ENCODE measurements at regions of chr3 and their contacts with region 1.

Region 1: DNA sequence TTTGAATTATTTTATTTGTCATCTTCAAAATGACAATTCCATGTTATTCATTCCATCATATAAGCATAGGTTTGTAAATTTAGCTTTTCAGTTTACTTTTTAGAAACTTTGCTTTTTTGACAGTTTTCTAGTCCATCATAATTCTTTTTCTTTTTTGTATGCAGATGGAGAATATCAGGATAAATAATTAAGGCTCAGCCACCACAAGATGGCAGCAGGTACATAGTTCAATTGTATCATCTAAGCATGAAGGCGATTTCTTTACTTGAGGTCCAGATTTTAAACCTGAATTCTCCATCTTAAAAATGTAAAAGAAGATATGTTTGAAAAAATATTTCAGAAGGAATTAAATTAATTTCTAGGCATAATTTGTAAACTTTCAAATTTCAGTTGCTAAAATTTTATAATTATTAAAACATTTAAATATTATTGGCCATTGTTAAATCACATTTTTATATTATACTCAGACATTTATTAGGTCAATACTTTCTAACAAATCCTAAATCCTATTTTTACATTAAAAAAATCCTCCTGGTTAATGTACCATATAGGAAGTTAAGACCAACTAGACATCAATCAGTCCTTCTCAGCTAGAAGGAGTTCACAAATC is 15.1 kb downstream of the PLSCR5 start:
- DNase-seq: no peak
- ATAC-seq: no peak
- H3K4me3 ChIP-seq: no peak overlapping the region
- H3K4me3 Mint-ChIP-seq: no peak overlapping the region
- H3K27ac ChIP-seq: no peak overlapping the region
- H3K27ac Mint-ChIP-seq: no peak overlapping the region
- H3K4me1 ChIP-seq: no peaks in the 10 kb centered on the region
- H3K4me1 Mint-ChIP-seq: no peaks in the 10 kb centered on the region
- H3K27me3 ChIP-seq: no peaks in the 10 kb centered on the region
- H3K27me3 Mint-ChIP-seq: peaks cover 0 to 35% (median 10%) of the 10 kb centered on the region in 5 donors

Region 2: GRCh38 chr3:146214493-146214892 is 375.5 kb before region 1 on chr3:
- CTCF ChIA-PET with region 1: no interaction called
- POLR2A ChIA-PET with region 1: no interaction called
- intact Hi-C with region 1: no loop called
- DNase-seq: no peak
- ATAC-seq: no peak
- H3K4me3 ChIP-seq: no peak overlapping the region
- H3K4me3 Mint-ChIP-seq: no peak overlapping the region
- H3K27ac ChIP-seq: no peak overlapping the region
- H3K27ac Mint-ChIP-seq: no peak overlapping the region
- H3K4me1 ChIP-seq: no peaks in the 10 kb centered on the region
- H3K4me1 Mint-ChIP-seq: no peaks in the 10 kb centered on the region
- H3K27me3 ChIP-seq: no peaks in the 10 kb centered on the region
- H3K27me3 Mint-ChIP-seq: peaks cover 0 to 17% (median 12%) of the 10 kb centered on the region in 5 donors

Region 3: DNA sequence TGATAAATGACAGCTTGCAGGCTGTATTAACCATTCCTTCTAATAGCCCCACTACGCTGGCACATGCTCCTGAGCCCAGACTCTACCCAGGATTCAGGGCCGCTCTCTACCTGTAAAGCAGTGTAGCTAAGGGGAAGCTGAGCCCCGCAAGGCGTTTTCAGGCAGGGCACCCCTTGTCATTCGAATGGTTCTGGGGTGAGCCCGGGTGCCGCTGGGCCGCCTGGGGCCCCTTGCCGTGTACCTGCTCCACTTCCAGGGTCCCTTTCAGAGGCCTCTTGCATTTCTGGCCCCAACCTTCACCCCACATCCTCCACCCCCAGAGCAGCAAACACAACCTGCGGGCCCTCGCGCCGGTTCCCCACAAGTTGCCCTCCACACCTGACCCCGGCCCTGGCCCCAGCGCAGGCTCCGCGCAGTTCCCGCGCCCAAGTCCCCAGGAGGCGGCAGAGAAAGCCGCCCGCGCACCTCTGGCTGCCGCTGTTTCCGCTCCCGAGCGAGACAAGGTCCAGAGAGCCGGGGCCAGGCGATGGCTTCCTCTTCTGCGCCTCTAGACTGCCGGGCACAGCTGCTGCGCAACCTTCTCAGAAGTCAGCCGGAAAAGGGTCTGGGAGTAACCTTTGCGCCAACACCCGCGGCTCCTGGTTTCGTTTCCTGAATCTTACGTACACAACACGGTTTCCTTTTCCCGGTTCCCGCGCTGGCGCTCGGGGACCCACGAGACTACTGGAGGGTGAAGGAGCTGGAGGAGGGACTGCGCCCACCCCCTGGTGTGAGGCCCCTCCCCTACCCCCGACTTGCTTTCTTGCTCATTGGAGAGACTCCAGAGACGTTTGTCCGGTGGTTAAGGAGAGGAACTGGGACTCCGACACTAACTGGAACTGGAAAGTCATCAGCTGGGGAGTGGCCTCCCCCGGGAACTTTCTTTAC is 45.7 kb before region 1 on chr3 and contains the start of gene PLSCR1:
- CTCF ChIA-PET with region 1: no interaction called
- POLR2A ChIA-PET with region 1: no interaction called
- intact Hi-C with region 1: no loop called
- DNase-seq: peak; percentile 40 to 77 (median 55)
- ATAC-seq: peak; percentile 86
- H3K4me3 ChIP-seq: peak within 1 kb of the TSS; percentile 82
- H3K4me3 Mint-ChIP-seq: peak within 1 kb of the TSS; percentile 91 to 98 (median 93)
- H3K27ac ChIP-seq: peak within 1 kb of the TSS; percentile 68
- H3K27ac Mint-ChIP-seq: peak within 1 kb of the TSS; percentile 29 to 97 (median 86)
- H3K4me1 ChIP-seq: peaks cover 12 to 28% of the 10 kb centered on the region in 2 donors
- H3K4me1 Mint-ChIP-seq: peaks cover 36 to 73% (median 57%) of the 10 kb centered on the region in 7 donors
- H3K27me3 ChIP-seq: no peaks in the 10 kb centered on the region
- H3K27me3 Mint-ChIP-seq: no peaks in the 10 kb centered on the region
- total RNA-seq, gene PLSCR1: 14.6 to 174 (median 16.1) TPM

Region 4: GRCh38 chr3:146640955-146641867 is 51.2 kb after region 1 on chr3:
- CTCF ChIA-PET with region 1: no interaction called
- POLR2A ChIA-PET with region 1: no interaction called
- intact Hi-C with region 1: loop called (anchors 1 kb)
- DNase-seq: peak in 2 of 9 donors; percentile 1 to 7
- ATAC-seq: no peak
- H3K4me3 ChIP-seq: no peak overlapping the region
- H3K4me3 Mint-ChIP-seq: no peak overlapping the region
- H3K27ac ChIP-seq: no peak overlapping the region
- H3K27ac Mint-ChIP-seq: no peak overlapping the region
- H3K4me1 ChIP-seq: no peaks in the 10 kb centered on the region
- H3K4me1 Mint-ChIP-seq: no peaks in the 10 kb centered on the region
- H3K27me3 ChIP-seq: no peaks in the 10 kb centered on the region
- H3K27me3 Mint-ChIP-seq: peaks cover 0 to 6% (median 5%) of the 10 kb centered on the region in 5 donors

Measured in naive thymus-derived CD4-positive, alpha-beta T cell (primary cell).